ENCODE measurements at regions of chr1 and their contacts with region 1.

Region 1: DNA sequence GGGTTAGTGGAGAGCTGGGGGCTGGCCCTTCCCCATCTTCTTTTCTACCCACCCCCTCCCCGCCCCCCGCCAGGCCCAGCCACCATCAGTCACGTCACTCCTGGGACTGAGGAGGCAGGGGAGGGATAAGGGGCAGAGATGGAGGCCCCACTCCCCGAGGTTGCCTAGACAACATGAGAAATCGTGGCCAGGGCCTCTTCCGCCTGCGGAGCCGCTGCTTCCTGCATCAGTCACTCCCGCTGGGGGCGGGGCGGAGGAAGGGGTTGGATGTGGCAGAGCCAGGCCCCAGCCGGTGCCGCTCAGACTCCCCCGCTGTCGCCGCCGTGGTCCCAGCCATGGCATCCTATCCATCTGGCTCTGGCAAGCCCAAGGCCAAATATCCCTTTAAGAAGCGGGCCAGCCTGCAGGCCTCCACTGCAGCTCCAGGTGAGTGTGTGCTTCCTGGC is 1.2 kb downstream of the AMPD2 start:
- DNase-seq: peak; percentile 97 to 99 (median 99)
- H3K4me3 ChIP-seq: peak overlapping the region; percentile 76 to 97 (median 93)
- H3K27ac ChIP-seq: peak overlapping the region; percentile 97 to 99
- H3K4me1 ChIP-seq: peaks cover 48 to 85% (median 75%) of the 10 kb centered on the region in 4 experiments
- H3K27me3 ChIP-seq: no peaks in the 10 kb centered on the region

Region 2: GRCh38 chr1:109548321-109549267 is 72.3 kb before region 1 on chr1 and contains the start of gene GNAI3:
- CTCF ChIA-PET with region 1: interaction called, 430 read pairs
- POLR2A ChIA-PET with region 1: interaction called, 14 read pairs
- DNase-seq: peak; percentile 98 to 99 (median 99)
- H3K4me3 ChIP-seq: peak within 1 kb of the TSS; percentile 96 to 99 (median 98)
- H3K27ac ChIP-seq: peak within 1 kb of the TSS; percentile 95 to 98
- H3K4me1 ChIP-seq: peaks cover 21 to 35% (median 32%) of the 10 kb centered on the region in 4 experiments
- H3K27me3 ChIP-seq: no peaks in the 10 kb centered on the region

Region 3: GRCh38 chr1:109598655-109599054 is 22.2 kb before region 1 on chr1:
- CTCF ChIA-PET with region 1: interaction called, 48 read pairs
- POLR2A ChIA-PET with region 1: interaction called, 3 read pairs
- DNase-seq: peak in 2 of 3 donors; percentile 34 to 35
- H3K4me3 ChIP-seq: no peak overlapping the region
- H3K27ac ChIP-seq: no peak overlapping the region
- H3K4me1 ChIP-seq: peaks cover 0 to 3% (median 0%) of the 10 kb centered on the region in 4 experiments
- H3K27me3 ChIP-seq: no peaks in the 10 kb centered on the region

Region 4: GRCh38 chr1:109605381-109605780 is 15.5 kb before region 1 on chr1:
- CTCF ChIA-PET with region 1: interaction called, 90 read pairs
- POLR2A ChIA-PET with region 1: interaction called, 4 read pairs
- DNase-seq: no peak
- H3K4me3 ChIP-seq: no peak overlapping the region
- H3K27ac ChIP-seq: no peak overlapping the region
- H3K4me1 ChIP-seq: peaks cover 0 to 7% (median 1%) of the 10 kb centered on the region in 4 experiments
- H3K27me3 ChIP-seq: no peaks in the 10 kb centered on the region

Region 5: GRCh38 chr1:109636201-109636952 is 15.5 kb after region 1 on chr1:
- CTCF ChIA-PET with region 1: interaction called, 69 read pairs
- POLR2A ChIA-PET with region 1: no interaction called
- DNase-seq: no peak
- H3K4me3 ChIP-seq: no peak overlapping the region
- H3K27ac ChIP-seq: no peak overlapping the region
- H3K4me1 ChIP-seq: peaks cover 0 to 28% (median 13%) of the 10 kb centered on the region in 4 experiments
- H3K27me3 ChIP-seq: no peaks in the 10 kb centered on the region

Region 6: GRCh38 chr1:109891930-109892329 is 271.1 kb after region 1 on chr1:
- CTCF ChIA-PET with region 1: no interaction called
- POLR2A ChIA-PET with region 1: no interaction called
- DNase-seq: no peak
- H3K4me3 ChIP-seq: no peak overlapping the region
- H3K27ac ChIP-seq: no peak overlapping the region
- H3K4me1 ChIP-seq: peaks cover 4 to 26% (median 17%) of the 10 kb centered on the region in 4 experiments
- H3K27me3 ChIP-seq: no peaks in the 10 kb centered on the region

Measured in common myeloid progenitor, CD34-positive (primary cell).